ENCODE measurements at regions of chr9 and their contacts with region 1.

Region 1: DNA sequence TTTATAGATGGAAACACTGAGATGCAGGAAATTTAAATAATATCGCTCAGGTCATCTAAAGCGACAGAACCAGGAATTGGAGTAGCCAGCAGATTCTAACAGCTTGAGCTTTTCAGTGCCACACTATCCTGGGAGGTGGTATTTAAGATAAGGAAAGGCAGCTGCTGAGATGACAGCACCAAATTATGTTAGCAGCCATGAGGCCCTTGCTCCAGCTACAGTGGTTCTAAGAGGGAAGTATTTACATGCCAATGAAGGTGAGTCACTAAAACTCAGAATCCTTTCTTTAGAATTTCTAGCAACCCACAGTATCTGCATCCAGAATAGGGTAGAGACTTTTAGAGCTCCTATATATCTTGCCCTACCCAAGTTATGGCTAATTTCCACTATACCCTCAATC is 127.0 kb upstream of the VLDLR start:
- DNase-seq: no peak
- ATAC-seq: peak in 2 of 4 donors; percentile 40 to 50
- H3K4me3 ChIP-seq: no peak overlapping the region
- H3K27ac ChIP-seq: peak overlapping the region in 9 of 12 donors; percentile 14 to 78 (median 67)
- H3K4me1 ChIP-seq: peaks cover 3 to 64% (median 23%) of the 10 kb centered on the region in 12 donors
- H3K27me3 ChIP-seq: no peaks in the 10 kb centered on the region
- CTCF ChIP-seq: no peak
- POLR2A ChIP-seq: no peak

Region 2: DNA sequence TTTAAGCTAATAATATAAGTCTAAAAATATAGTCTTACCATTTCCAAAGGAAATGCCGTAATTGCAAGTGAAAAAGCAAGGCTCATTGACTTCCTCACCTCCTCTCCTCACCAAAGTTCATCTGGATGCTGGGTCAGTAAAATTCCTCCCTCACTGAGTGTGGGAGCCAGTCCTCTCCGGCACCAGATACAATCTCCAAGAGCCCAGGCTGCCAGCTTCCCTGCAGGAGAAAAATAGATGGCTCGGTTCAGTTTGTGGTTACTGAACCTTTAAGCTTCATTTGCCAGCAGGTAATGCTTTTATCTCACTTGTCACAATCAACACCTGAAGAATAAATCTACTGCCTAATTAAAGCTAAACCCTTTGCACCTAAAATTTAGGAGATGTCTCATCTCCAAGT is 11.8 kb after region 1 on chr9:
- intact Hi-C with region 1: no loop called
- DNase-seq: peak in 1 of 5 donors; percentile 17
- ATAC-seq: peak in 3 of 4 donors; percentile 36 to 73 (median 41)
- H3K4me3 ChIP-seq: no peak overlapping the region
- H3K27ac ChIP-seq: peak overlapping the region in 1 of 12 donors; percentile 37
- H3K4me1 ChIP-seq: peaks cover 0 to 15% (median 0%) of the 10 kb centered on the region in 12 donors
- H3K27me3 ChIP-seq: no peaks in the 10 kb centered on the region
- CTCF ChIP-seq: no peak
- POLR2A ChIP-seq: no peak

Region 3: DNA sequence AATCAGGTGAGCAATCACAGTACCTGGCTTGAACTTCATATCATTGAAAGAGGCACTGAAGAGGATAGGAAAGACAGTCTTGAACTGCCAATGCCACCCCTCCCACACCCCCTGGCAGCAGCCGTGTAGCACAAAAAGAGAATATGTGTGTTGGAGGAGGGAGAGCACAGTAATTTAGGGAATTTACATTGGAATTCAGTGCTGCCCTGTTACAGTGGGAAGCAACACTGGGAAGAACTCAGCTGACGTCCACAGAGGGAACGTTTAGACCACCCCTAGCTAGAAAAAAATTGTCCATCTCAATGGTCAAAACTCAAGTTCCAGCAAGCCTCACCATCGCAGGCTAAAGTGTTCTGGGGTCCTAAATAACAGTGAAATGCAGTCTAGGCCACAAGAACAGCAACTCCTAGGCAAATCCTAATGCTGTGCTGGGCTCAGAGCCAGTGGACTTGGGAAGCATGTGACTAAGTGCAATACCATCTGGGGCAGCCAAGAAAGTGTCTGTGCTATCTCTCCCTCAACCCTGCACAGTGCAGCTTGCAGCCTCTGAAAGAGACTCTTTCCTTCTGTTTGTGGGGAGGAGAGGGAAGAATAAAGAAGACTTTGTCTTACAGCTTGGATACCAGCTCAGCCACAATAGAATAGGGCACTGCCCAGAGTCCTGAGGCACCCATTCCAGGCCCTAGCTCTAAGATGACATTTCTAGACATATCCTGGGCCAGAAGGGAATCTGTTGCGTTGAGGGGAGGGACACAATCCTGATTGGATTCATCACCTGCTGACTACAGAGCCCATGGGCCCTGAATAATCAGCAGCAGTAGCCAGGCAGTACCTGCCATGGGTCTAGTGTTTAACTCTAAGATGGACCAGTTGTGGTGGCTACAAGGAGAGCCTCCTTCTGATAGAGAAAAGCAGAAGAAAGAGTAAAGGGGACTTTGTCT is 64.9 kb after region 1 on chr9:
- intact Hi-C with region 1: loop called in 1 of 10 experiments (anchors 2 kb)
- DNase-seq: peak; percentile 80 to 95 (median 89)
- ATAC-seq: peak; percentile 98 to 99 (median 99)
- H3K4me3 ChIP-seq: peak overlapping the region in 1 of 12 donors; percentile 15
- H3K27ac ChIP-seq: peak overlapping the region; percentile 73 to 91 (median 84)
- H3K4me1 ChIP-seq: peaks cover 3 to 33% (median 22%) of the 10 kb centered on the region in 12 donors
- H3K27me3 ChIP-seq: no peaks in the 10 kb centered on the region
- CTCF ChIP-seq: peak in 1 of 12 donors; percentile 7
- POLR2A ChIP-seq: peak in 1 of 2 donors; percentile 16

Region 4: GRCh38 chr9:2570615-2571479 is 76.3 kb after region 1 on chr9:
- intact Hi-C with region 1: loop called in 5 of 10 experiments (anchors 5 kb)
- DNase-seq: peak; percentile 91 to 97 (median 93)
- ATAC-seq: peak; percentile 92 to 97 (median 94)
- H3K4me3 ChIP-seq: peak overlapping the region in 3 of 12 donors; percentile 9 to 25 (median 10)
- H3K27ac ChIP-seq: peak overlapping the region; percentile 49 to 89 (median 80)
- H3K4me1 ChIP-seq: peaks cover 5 to 67% (median 28%) of the 10 kb centered on the region in 12 donors
- H3K27me3 ChIP-seq: no peaks in the 10 kb centered on the region
- CTCF ChIP-seq: peak in 5 of 12 donors; percentile 7 to 31 (median 13)
- POLR2A ChIP-seq: no peak

Measured in heart left ventricle (tissue), 16 donors.